A673 (cell line): ENCODE measurements at regions of chr6 and their contacts with region 1.

Region 1: GRCh38 chr6:34275128-34275804 is 26.5 kb upstream of the SMIM29 start:
- DNase-seq: no peak
- H3K4me3 ChIP-seq: no peak overlapping the region
- H3K27ac ChIP-seq: no peak overlapping the region
- H3K4me1 ChIP-seq: no peaks in the 10 kb centered on the region
- H3K27me3 ChIP-seq: no peaks in the 10 kb centered on the region
- CTCF ChIP-seq: no peak

Region 2: DNA sequence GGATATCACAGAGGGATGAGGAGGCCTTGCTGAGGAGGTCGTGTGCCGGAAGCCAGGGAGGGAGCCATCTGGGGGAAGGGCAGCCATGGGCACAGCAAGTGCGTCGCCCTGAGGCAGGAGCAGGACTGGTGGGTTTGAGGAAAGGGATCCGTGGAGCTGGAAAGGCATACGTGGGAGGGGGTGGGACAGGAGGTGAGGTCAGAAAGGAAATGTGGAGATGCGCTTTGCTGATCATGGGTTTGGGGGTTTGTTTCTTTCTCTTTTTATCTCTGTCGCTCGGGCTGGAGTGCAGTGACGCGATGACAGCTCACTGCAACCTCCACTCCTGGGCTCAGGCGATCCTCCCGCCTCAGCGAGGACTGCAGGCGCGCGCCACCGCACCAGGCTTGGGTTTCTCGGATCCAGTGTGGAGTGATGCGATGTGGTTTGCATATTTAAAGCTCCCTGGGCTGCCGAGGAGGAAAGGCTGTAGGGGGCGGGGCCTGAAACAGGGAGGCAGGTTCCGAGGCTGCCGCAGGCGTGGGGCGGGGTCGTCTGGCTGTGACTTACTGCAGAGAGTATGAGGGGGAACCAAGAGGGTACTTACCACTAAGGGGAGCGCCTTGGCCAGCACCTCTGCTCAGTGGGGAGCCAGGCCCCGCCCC is 682.7 kb before region 1 on chr6:
- CTCF ChIA-PET with region 1: no interaction called
- POLR2A ChIA-PET with region 1: no interaction called
- intact Hi-C with region 1: no loop called
- DNase-seq: no peak
- H3K4me3 ChIP-seq: no peak overlapping the region
- H3K27ac ChIP-seq: no peak overlapping the region
- H3K4me1 ChIP-seq: no peaks in the 10 kb centered on the region
- H3K27me3 ChIP-seq: no peaks in the 10 kb centered on the region
- CTCF ChIP-seq: no peak

Region 3: GRCh38 chr6:34301408-34301807 is 26.1 kb after region 1 on chr6:
- CTCF ChIA-PET with region 1: no interaction called
- POLR2A ChIA-PET with region 1: interaction called, 11 read pairs
- intact Hi-C with region 1: no loop called
- DNase-seq: peak; percentile 15
- H3K4me3 ChIP-seq: no peak overlapping the region
- H3K27ac ChIP-seq: no peak overlapping the region
- H3K4me1 ChIP-seq: peaks cover 8% of the 10 kb centered on the region
- H3K27me3 ChIP-seq: no peaks in the 10 kb centered on the region
- CTCF ChIP-seq: no peak